ENCODE measurements at regions of chr3 and their contacts with region 1.

Region 1: DNA sequence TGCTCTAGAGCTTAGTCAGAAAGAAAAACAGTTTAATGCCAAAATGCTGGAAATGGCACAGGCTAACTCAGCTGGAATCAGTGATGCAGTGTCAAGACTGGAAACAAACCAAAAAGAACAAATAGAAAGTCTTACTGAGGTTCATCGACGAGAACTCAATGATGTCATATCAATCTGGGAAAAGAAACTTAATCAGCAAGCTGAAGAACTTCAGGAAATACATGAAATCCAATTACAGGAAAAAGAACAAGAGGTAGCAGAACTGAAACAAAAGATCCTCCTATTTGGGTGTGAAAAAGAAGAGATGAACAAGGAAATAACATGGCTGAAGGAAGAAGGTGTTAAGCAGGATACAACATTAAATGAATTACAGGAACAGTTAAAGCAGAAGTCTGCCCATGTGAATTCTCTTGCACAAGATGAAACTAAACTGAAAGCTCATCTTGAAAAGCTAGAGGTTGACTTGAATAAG is 150.5 kb upstream of the LRRFIP2 start:
- DNase-seq: no peak
- H3K4me3 ChIP-seq: no peak overlapping the region
- H3K27me3 ChIP-seq: no peaks in the 10 kb centered on the region
- CTCF ChIP-seq: no peak

Region 2: GRCh38 chr3:37308247-37308646 is 16.6 kb before region 1 on chr3:
- CTCF ChIA-PET with region 1: interaction called, 10 read pairs
- POLR2A ChIA-PET with region 1: interaction called, 3 read pairs
- DNase-seq: no peak
- H3K4me3 ChIP-seq: no peak overlapping the region
- H3K27me3 ChIP-seq: no peaks in the 10 kb centered on the region
- CTCF ChIP-seq: peak; percentile 17; the same call in 1 of the 2 replicates

Region 3: GRCh38 chr3:37397396-37397795 is 72.5 kb after region 1 on chr3:
- CTCF ChIA-PET with region 1: no interaction called
- POLR2A ChIA-PET with region 1: no interaction called
- DNase-seq: no peak
- H3K4me3 ChIP-seq: no peak overlapping the region
- H3K27me3 ChIP-seq: no peaks in the 10 kb centered on the region
- CTCF ChIP-seq: no peak

Measured in BJ (cell line).